ENCODE measurements at regions of chr13 and their contacts with region 1.

Region 1: DNA sequence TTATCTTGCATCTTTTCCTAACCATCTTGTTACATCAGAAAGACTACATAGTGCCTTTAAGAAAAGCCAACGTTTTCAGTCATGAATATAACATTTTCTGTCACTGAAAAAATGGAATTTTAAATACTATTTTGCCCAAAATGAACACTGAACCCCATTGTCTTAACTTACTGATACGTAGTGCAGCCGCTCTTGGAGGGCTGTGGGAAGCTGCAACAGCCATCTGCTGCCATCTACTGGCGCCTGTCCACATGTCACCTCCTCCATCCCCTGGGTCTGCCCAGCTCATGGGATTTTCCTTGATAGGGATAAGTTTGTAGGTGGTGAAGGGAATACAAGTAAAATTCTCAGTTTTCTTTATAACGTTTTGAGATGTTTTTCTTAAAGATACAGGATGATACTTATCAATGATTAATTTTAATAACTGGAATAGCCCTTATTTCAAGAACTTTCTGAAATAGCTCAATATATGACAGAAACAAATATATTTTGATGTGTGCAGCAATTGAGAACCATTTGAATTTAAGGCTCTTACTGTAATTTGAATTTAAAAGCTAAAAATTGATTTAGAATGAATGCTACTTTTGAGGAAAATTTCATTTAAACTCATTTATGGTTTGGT is 73.7 kb downstream of the GGACT start:
- DNase-seq: peak; percentile 74
- H3K4me3 Mint-ChIP-seq: no peak overlapping the region
- H3K27ac Mint-ChIP-seq: no peak overlapping the region
- H3K4me1 Mint-ChIP-seq: peaks cover 12% of the 10 kb centered on the region
- H3K27me3 Mint-ChIP-seq: no peaks in the 10 kb centered on the region
- CTCF ChIP-seq: peak; percentile 95

Region 2: DNA sequence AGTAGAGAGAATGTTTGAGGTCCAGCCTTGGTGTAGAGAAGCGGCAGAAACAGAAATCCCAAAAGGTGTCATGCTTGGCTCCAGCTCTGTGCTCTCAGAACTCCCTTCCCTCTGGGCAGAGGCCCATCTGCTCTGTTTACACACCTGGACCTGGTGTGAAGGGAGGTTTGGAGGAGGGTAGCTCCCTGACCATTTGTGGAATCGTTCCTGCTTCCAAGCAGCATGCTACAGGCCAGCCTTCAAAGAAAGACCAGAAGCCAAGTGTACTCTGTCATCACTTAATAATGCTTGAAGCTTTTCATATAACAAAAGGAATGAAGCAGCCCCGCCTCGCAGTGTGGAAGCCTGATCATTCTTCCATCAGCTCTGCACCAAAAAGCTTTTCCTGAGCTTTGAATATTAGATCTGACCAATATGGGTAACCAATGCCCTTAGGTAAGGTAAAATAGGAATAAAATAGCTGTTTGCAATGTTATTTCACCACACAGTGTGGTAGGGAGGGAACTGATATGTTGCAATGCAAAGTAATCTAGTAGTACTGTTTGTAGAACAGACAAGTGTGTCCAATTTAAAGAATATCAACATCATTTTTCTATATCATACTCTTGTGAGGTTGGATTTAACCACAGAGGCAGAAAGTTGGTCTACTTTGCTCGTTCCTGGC is 606.6 kb before region 1 on chr13:
- CTCF ChIA-PET with region 1: interaction called, 16 read pairs
- POLR2A ChIA-PET with region 1: no interaction called
- intact Hi-C with region 1: no loop called
- DNase-seq: no peak
- H3K4me3 Mint-ChIP-seq: no peak overlapping the region
- H3K27ac Mint-ChIP-seq: no peak overlapping the region
- H3K4me1 Mint-ChIP-seq: peaks cover 22% of the 10 kb centered on the region
- H3K27me3 Mint-ChIP-seq: no peaks in the 10 kb centered on the region
- CTCF ChIP-seq: no peak

Region 3: DNA sequence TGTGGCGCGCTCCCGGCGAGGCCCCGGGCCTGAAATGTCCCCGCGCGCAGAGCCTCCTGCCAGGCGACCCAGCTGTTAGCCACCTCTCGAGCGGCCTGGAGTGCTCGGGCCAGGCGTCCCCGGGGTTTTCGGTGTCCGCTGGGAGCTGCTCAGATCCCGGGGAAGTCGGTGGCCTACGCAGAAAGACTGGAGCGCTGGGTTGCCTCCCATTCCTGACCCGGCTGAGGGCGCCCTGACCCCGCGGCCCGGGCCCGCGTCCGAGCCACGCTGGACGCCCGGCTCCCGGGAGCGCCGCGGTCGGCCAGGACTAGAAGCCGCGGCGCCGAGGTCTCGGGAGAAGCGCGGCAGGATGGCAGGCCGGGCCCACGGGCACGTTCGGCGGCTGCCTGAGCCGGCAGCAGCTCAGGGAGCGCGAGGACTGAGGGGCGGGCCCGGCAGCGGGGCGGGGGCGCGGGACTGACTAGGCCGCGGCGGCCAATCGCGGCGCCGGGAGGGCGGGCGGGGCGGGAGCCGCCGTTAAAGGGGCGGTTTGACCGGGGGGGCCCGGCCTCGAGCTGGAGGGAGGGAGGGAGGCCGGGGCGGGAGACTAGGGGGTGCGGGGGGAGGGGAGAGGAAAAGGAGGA is 534.6 kb before region 1 on chr13:
- CTCF ChIA-PET with region 1: no interaction called
- POLR2A ChIA-PET with region 1: no interaction called
- intact Hi-C with region 1: loop called (anchors 5 kb)
- DNase-seq: peak; percentile 81
- H3K4me3 Mint-ChIP-seq: peak overlapping the region; percentile 73
- H3K27ac Mint-ChIP-seq: no peak overlapping the region
- H3K4me1 Mint-ChIP-seq: peaks cover 4% of the 10 kb centered on the region
- H3K27me3 Mint-ChIP-seq: no peaks in the 10 kb centered on the region
- CTCF ChIP-seq: no peak

Region 4: DNA sequence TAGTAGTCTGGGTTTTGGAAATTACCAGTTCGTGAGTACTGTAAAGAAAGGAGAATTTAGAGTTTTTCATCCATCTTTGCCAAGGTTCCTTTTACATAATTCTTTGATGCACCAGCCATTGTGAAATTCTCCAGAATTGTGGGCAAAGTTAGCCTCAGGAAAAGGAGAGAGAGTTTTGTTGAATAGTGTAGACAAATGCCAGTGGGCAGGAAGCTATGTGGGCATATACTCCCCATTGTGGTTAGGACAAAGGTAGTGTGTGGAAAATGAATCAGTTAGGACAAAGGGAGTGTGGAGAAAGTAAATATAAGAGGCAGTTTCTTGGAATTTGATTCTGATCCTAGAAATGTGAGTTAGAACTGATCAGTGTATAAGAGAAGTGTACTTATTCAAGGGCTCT is 358.1 kb before region 1 on chr13:
- CTCF ChIA-PET with region 1: no interaction called
- POLR2A ChIA-PET with region 1: no interaction called
- intact Hi-C with region 1: loop called (anchors 10 kb)
- DNase-seq: peak; percentile 87
- H3K4me3 Mint-ChIP-seq: peak overlapping the region; percentile 0
- H3K27ac Mint-ChIP-seq: peak overlapping the region; percentile 61
- H3K4me1 Mint-ChIP-seq: peaks cover 14% of the 10 kb centered on the region
- H3K27me3 Mint-ChIP-seq: no peaks in the 10 kb centered on the region
- CTCF ChIP-seq: no peak

Region 5: DNA sequence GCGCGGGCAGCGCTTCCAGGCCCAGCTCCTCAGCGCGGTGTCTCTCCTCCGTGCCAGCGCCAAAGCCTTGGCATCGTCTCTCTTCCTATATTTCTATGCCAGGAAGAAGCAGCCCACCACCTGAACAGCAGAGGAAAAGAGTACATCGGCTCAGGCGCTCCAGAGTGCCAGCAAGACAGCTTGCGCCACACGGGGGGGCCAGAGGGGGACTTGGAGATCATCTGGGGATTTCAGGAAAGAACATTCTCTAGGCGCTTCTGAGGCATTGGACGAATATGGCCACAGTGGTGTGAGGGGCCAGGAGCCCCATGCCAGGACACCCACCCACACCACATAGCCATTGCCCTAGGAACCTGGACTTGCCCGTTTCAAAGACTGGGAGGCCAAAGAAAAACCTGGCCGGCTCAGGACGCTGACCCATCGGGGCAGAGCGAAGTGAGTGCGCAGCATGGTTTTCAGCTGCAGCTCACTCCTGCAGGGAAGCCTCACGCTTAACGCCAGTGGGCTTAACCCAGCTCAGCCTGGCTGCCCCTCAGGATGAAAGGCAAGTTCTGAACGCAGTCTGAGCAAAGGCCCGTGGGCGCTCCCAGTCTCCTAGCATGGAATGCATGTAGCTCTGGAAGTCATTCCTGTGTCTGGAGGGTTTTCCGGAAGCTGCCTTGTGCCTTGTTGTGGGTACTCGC is 11.6 kb after region 1 on chr13:
- CTCF ChIA-PET with region 1: interaction called, 19 read pairs
- POLR2A ChIA-PET with region 1: no interaction called
- intact Hi-C with region 1: no loop called
- DNase-seq: no peak
- H3K4me3 Mint-ChIP-seq: no peak overlapping the region
- H3K27ac Mint-ChIP-seq: peak overlapping the region; percentile 19
- H3K4me1 Mint-ChIP-seq: no peaks in the 10 kb centered on the region
- H3K27me3 Mint-ChIP-seq: no peaks in the 10 kb centered on the region
- CTCF ChIP-seq: no peak

Measured in MCF 10A (cell line).